GM12878 (cell line): ENCODE measurements at regions of chr11 and their contacts with region 1.

Region 1: GRCh38 chr11:94553938-94554337 is 10.2 kb downstream of the FUT4 start:
- DNase-seq: no peak
- ATAC-seq: no peak
- H3K4me3 ChIP-seq: no peak overlapping the region
- H3K27ac ChIP-seq: no peak overlapping the region
- H3K4me1 ChIP-seq: no peaks in the 10 kb centered on the region; the same call in 1 of the 2 replicates
- H3K27me3 ChIP-seq: no peaks in the 10 kb centered on the region
- CTCF ChIP-seq: no peak
- EP300 ChIP-seq: no peak
- POLR2A ChIP-seq: no peak
- RAD21 ChIP-seq: no peak

Region 2: GRCh38 chr11:94583866-94584500 is 30.0 kb after region 1 on chr11:
- CTCF ChIA-PET with region 1: interaction called, 8 read pairs
- POLR2A ChIA-PET with region 1: interaction called, 27 read pairs
- RAD21 ChIA-PET with region 1: interaction called, 33 read pairs
- SMC1A ChIA-PET with region 1: interaction called, 107 read pairs
- in situ Hi-C with region 1: no loop called
- intact Hi-C with region 1: loop called (anchors 1 kb)
- DNase-seq: peak; percentile 62
- ATAC-seq: peak; percentile 73
- H3K4me3 ChIP-seq: peak overlapping the region; percentile 8
- H3K27ac ChIP-seq: peak overlapping the region; percentile 84
- H3K4me1 ChIP-seq: peaks cover 22% of the 10 kb centered on the region
- H3K27me3 ChIP-seq: no peaks in the 10 kb centered on the region
- CTCF ChIP-seq: no peak
- EP300 ChIP-seq: peak; percentile 81 to 82; a peak in 3 of 4 replicates
- POLR2A ChIP-seq: no peak
- RAD21 ChIP-seq: no peak